ENCODE measurements at regions of chr1 and their contacts with region 1.

Region 1: GRCh38 chr1:174074757-174075156 is 52.6 kb upstream of the RC3H1 start:
- DNase-seq: peak in 2 of 4 experiments; percentile 30 to 34
- ATAC-seq: peak; percentile 54; the same call in 2 of the 3 replicates
- H3K4me3 ChIP-seq: no peak overlapping the region
- H3K27ac ChIP-seq: peak overlapping the region; percentile 14; the same call in 1 of the 3 replicates
- H3K4me1 ChIP-seq: peaks cover 0 to 7% of the 10 kb centered on the region in 2 experiments; a peak in 2 of 5 replicates
- H3K27me3 ChIP-seq: no peaks in the 10 kb centered on the region
- CTCF ChIP-seq: peak in 2 of 3 experiments; percentile 45 to 81; a peak in 4 of 6 replicates
- EP300 ChIP-seq: 0 out of 2 replicates have a peak, but pooled peaks have one; percentile 7
- POLR2A ChIP-seq: no peak
- RAD21 ChIP-seq: peak; percentile 80 to 87

Region 2: GRCh38 chr1:172745014-172745413 is 1329.7 kb before region 1 on chr1:
- CTCF ChIA-PET with region 1: interaction called, 4 read pairs
- POLR2A ChIA-PET with region 1: no interaction called
- in situ Hi-C with region 1: loop called (anchors 25 kb)
- intact Hi-C with region 1: loop called (anchors 10 kb)
- DNase-seq: peak; percentile 28 to 71 (median 39)
- ATAC-seq: peak; percentile 90
- H3K4me3 ChIP-seq: no peak overlapping the region
- H3K27ac ChIP-seq: no peak overlapping the region
- H3K4me1 ChIP-seq: peaks cover 3 to 7% of the 10 kb centered on the region in 2 experiments; a peak in 3 of 5 replicates
- H3K27me3 ChIP-seq: no peaks in the 10 kb centered on the region; a peak in 1 of 5 replicates
- CTCF ChIP-seq: peak; percentile 69 to 88 (median 70)
- EP300 ChIP-seq: no peak
- POLR2A ChIP-seq: no peak
- RAD21 ChIP-seq: peak; percentile 99

Region 3: DNA sequence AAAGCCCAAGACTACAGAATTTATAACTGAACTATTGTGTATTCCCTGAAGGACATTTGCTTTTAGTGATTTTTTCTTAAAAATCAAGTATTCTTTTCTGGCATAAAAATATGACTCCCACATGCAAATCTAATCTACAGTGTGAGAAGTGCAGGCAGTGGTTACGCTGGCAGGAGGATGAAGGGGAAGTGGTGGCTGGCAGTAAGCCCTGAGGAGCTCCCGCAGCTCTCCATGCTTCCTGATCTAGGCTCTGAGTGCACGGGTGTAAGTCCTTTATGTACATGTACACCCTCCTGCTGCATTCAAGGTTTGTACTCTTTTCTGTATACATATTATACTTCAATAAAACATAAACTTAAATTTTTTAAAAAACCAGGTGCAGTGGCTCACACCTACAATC is 665.1 kb before region 1 on chr1:
- CTCF ChIA-PET with region 1: no interaction called
- POLR2A ChIA-PET with region 1: no interaction called
- in situ Hi-C with region 1: loop called (anchors 10 kb)
- intact Hi-C with region 1: no loop called
- DNase-seq: no peak
- ATAC-seq: peak; percentile 35; the same call in 1 of the 3 replicates
- H3K4me3 ChIP-seq: no peak overlapping the region
- H3K27ac ChIP-seq: no peak overlapping the region
- H3K4me1 ChIP-seq: peaks cover 6 to 9% of the 10 kb centered on the region in 2 experiments
- H3K27me3 ChIP-seq: no peaks in the 10 kb centered on the region
- CTCF ChIP-seq: no peak
- EP300 ChIP-seq: no peak
- POLR2A ChIP-seq: no peak
- RAD21 ChIP-seq: no peak

Region 4: DNA sequence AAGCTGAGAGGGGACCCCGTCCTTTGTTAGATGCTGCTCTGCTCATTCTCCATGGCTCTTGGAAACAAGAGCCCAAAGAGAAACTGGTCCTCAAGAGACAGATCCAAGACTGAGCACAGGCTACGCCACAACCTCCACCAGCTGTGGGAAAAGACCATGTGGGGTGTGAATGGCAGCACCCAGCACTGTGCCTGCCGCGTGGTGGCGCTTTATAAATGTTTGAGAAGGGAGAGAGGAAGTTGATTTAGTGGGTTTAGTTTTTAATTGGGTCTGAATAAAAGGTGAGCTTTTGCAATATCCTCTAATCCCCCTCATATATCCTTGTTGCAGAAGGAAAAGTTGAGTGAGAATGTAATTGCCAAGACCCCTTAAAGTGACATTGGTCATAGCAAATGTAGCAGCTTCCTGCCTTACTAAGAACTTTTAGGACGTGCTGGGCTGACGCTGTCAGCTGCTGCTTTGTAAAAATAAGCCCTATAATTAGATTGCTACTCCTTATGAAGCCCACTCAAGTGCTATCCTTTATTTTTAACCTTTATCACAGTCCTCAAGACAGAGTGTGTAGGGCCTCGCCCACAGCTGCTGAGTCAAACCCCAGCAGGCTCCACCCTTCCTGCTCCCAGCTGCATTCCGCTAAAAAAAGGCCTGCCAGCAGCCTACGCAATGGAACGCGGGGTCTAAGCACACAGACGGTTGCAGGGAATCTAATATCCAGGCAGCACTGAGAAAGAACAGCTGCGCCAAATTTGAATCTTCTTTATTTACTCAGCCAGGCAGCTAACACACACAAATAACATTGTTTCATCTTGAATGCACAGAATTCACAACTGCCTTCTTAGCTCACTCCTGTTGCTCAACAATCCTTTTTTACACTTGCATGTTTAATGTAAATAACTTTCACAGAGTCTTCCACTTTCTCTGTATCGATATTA is 645.0 kb before region 1 on chr1:
- CTCF ChIA-PET with region 1: interaction called, 3 read pairs
- POLR2A ChIA-PET with region 1: interaction called, 3 read pairs
- in situ Hi-C with region 1: no loop called
- intact Hi-C with region 1: loop called (anchors 2 kb)
- DNase-seq: peak; percentile 78 to 96 (median 83)
- ATAC-seq: peak; percentile 94
- H3K4me3 ChIP-seq: peak overlapping the region; percentile 5; the same call in 1 of the 2 replicates
- H3K27ac ChIP-seq: peak overlapping the region; percentile 89
- H3K4me1 ChIP-seq: peaks cover 19 to 63% of the 10 kb centered on the region in 2 experiments; a peak in 4 of 5 replicates
- H3K27me3 ChIP-seq: no peaks in the 10 kb centered on the region
- CTCF ChIP-seq: peak; percentile 70 to 94 (median 82)
- EP300 ChIP-seq: peak; percentile 64; the same call in 1 of the 2 replicates
- POLR2A ChIP-seq: peak; percentile 58
- RAD21 ChIP-seq: peak; percentile 55 to 75

Region 5: DNA sequence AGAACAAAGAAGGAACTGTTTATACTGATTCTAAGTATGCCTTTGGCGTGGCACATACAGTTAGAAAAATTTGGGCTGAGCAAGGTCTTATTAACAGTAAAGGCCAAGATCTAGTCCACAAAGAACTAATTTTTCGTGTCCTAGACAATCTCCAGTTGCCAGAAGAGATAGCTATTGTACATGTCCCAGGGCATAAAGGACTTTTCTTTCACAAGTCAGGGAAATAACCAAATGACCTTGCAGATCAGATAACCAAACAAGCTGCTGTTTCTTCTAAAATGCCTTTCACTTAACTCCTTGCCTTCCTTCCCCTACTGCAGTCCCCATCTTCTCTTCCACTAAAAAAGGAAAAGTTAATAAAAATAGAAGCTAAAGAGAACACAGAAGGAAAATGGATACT is 435.7 kb before region 1 on chr1:
- CTCF ChIA-PET with region 1: no interaction called
- POLR2A ChIA-PET with region 1: no interaction called
- in situ Hi-C with region 1: no loop called
- intact Hi-C with region 1: no loop called
- DNase-seq: peak in 1 of 4 experiments; percentile 28
- ATAC-seq: peak; percentile 42
- H3K4me3 ChIP-seq: no peak overlapping the region
- H3K27ac ChIP-seq: no peak overlapping the region
- H3K4me1 ChIP-seq: peaks cover 0 to 3% of the 10 kb centered on the region in 2 experiments; a peak in 2 of 5 replicates
- H3K27me3 ChIP-seq: no peaks in the 10 kb centered on the region
- CTCF ChIP-seq: no peak
- EP300 ChIP-seq: no peak
- POLR2A ChIP-seq: no peak
- RAD21 ChIP-seq: no peak

Region 6: GRCh38 chr1:173824331-173825081 is 250.3 kb before region 1 on chr1 and contains the starts of genes CENPL and DARS2:
- CTCF ChIA-PET with region 1: no interaction called
- POLR2A ChIA-PET with region 1: no interaction called
- in situ Hi-C with region 1: no loop called
- intact Hi-C with region 1: loop called (anchors 2 kb)
- DNase-seq: peak; percentile 76 to 98 (median 84)
- ATAC-seq: peak; percentile 90
- H3K4me3 ChIP-seq: peak within 1 kb of the TSS; percentile 56
- H3K27ac ChIP-seq: peak within 1 kb of the TSS; percentile 91
- H3K4me1 ChIP-seq: peaks cover 8 to 13% of the 10 kb centered on the region in 2 experiments; a peak in 4 of 5 replicates
- H3K27me3 ChIP-seq: no peaks in the 10 kb centered on the region
- CTCF ChIP-seq: no peak
- EP300 ChIP-seq: peak; percentile 7
- POLR2A ChIP-seq: peak; percentile 98
- RAD21 ChIP-seq: no peak
- polyA plus RNA-seq, gene CENPL: 37.0 to 39.7 TPM
- polyA plus RNA-seq, gene DARS2: 55.4 to 74.8 TPM

Region 7: DNA sequence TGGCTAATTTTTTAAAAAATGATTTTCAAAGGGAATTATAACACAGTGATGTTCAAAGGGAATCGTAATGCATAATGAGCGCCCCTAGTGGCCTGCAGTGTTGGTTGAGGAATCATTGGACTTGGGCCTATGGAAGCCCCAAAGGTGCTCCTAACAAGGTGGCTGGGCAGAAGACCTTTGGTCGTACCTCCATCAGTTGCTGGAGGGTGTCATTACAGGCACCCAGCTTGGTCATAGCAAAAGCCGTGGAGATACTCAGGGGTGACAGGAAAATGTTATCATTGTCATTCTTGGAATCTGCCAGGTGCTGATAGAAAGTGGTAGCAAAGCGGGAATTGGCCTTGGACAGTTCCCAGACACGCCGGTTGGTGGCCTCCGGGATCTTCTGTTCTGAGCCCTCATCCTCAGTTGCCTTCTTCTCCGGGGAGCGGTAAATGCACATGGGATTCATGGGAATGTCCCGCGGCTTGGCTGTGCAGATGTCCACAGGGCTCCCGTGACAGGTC is 160.3 kb before region 1 on chr1:
- CTCF ChIA-PET with region 1: no interaction called
- POLR2A ChIA-PET with region 1: no interaction called
- in situ Hi-C with region 1: no loop called
- intact Hi-C with region 1: loop called (anchors 5 kb)
- DNase-seq: peak; percentile 74 to 81 (median 76)
- ATAC-seq: peak; percentile 88
- H3K4me3 ChIP-seq: no peak overlapping the region
- H3K27ac ChIP-seq: no peak overlapping the region
- H3K4me1 ChIP-seq: peaks cover 4 to 20% of the 10 kb centered on the region in 2 experiments; a peak in 4 of 5 replicates
- H3K27me3 ChIP-seq: no peaks in the 10 kb centered on the region
- CTCF ChIP-seq: peak; percentile 72 to 93 (median 82)
- EP300 ChIP-seq: 0 out of 2 replicates have a peak, but pooled peaks have one; percentile 15
- POLR2A ChIP-seq: no peak
- RAD21 ChIP-seq: peak; percentile 12 to 61; a peak in 2 of 4 replicates

Region 8: DNA sequence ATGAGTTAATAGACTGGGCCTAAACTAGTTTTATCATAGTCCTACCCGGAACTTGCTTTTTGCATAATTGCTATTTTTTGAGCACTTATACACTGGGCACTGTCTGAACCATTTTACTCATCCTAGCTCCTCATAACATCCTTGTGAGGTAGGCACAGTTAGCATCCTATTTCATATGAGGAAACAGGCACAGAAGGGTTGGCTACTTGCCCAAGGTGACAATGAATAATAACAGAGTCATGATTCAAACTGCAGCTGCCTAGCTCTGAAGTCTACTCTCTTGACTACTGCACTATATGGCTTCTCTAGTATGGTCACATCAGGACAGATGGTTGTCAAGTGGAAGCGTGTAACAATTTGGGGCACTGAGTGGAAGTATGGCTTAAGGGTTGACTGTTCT is 34.4 kb before region 1 on chr1:
- CTCF ChIA-PET with region 1: no interaction called
- POLR2A ChIA-PET with region 1: no interaction called
- in situ Hi-C with region 1: no loop called
- intact Hi-C with region 1: no loop called
- DNase-seq: peak in 1 of 4 experiments; percentile 26
- ATAC-seq: peak; percentile 42
- H3K4me3 ChIP-seq: no peak overlapping the region
- H3K27ac ChIP-seq: no peak overlapping the region
- H3K4me1 ChIP-seq: 0 out of 5 replicates have a peak, but pooled peaks cover 0 to 4% of the 10 kb centered on the region in 2 experiments
- H3K27me3 ChIP-seq: no peaks in the 10 kb centered on the region
- CTCF ChIP-seq: no peak
- EP300 ChIP-seq: no peak
- POLR2A ChIP-seq: no peak
- RAD21 ChIP-seq: no peak